ENCODE measurements at regions of chr5 and their contacts with region 1.

Region 1: GRCh38 chr5:138649316-138649720 is 74.1 kb upstream of the HSPA9 start:
- DNase-seq: peak; percentile 53

Region 2: GRCh38 chr5:138696503-138697191 is 47.3 kb after region 1 on chr5:
- intact Hi-C with region 1: no loop called
- DNase-seq: no peak

Region 3: GRCh38 chr5:138927979-138928378 is 278.7 kb after region 1 on chr5:
- intact Hi-C with region 1: loop called (anchors 5 kb)
- DNase-seq: peak; percentile 86